HepG2 (cell line): ENCODE measurements at regions of chr3 and their contacts with region 1.

Region 1: GRCh38 chr3:50568947-50569749 is at the start of gene HEMK1:
- DNase-seq: peak; percentile 85
- ATAC-seq: peak; percentile 85
- H3K4me3 ChIP-seq: peak within 1 kb of the TSS; percentile 62 to 84 (median 82)
- H3K27ac ChIP-seq: peak within 1 kb of the TSS; percentile 77
- H3K4me1 ChIP-seq: peaks cover 57% of the 10 kb centered on the region
- H3K27me3 ChIP-seq: peaks cover 4 to 7% of the 10 kb centered on the region in 2 experiments; a peak in 2 of 5 replicates
- CTCF ChIP-seq: no peak
- EP300 ChIP-seq: no peak
- POLR2A ChIP-seq: no peak; a peak in 2 of 4 replicates
- RAD21 ChIP-seq: 0 out of 2 replicates have a peak, but pooled peaks have one; percentile 22
- total RNA-seq, gene HEMK1: 6.3 and 9.8 TPM in 2 replicates

Region 2: GRCh38 chr3:50515565-50516439 is 53.3 kb before region 1 on chr3:
- CTCF ChIA-PET with region 1: no interaction called
- POLR2A ChIA-PET with region 1: no interaction called
- in situ Hi-C with region 1: no loop called
- intact Hi-C with region 1: no loop called
- DNase-seq: peak; percentile 68
- ATAC-seq: peak; percentile 80
- H3K4me3 ChIP-seq: peak overlapping the region; percentile 20 to 51 (median 37); a peak in 5 of 6 replicates
- H3K27ac ChIP-seq: no peak overlapping the region
- H3K4me1 ChIP-seq: peaks cover 40% of the 10 kb centered on the region
- H3K27me3 ChIP-seq: peaks cover 2 to 48% of the 10 kb centered on the region in 2 experiments; a peak in 3 of 5 replicates
- CTCF ChIP-seq: peak; percentile 40
- EP300 ChIP-seq: no peak; a peak in 1 of 4 replicates
- POLR2A ChIP-seq: no peak
- RAD21 ChIP-seq: no peak

Region 3: DNA sequence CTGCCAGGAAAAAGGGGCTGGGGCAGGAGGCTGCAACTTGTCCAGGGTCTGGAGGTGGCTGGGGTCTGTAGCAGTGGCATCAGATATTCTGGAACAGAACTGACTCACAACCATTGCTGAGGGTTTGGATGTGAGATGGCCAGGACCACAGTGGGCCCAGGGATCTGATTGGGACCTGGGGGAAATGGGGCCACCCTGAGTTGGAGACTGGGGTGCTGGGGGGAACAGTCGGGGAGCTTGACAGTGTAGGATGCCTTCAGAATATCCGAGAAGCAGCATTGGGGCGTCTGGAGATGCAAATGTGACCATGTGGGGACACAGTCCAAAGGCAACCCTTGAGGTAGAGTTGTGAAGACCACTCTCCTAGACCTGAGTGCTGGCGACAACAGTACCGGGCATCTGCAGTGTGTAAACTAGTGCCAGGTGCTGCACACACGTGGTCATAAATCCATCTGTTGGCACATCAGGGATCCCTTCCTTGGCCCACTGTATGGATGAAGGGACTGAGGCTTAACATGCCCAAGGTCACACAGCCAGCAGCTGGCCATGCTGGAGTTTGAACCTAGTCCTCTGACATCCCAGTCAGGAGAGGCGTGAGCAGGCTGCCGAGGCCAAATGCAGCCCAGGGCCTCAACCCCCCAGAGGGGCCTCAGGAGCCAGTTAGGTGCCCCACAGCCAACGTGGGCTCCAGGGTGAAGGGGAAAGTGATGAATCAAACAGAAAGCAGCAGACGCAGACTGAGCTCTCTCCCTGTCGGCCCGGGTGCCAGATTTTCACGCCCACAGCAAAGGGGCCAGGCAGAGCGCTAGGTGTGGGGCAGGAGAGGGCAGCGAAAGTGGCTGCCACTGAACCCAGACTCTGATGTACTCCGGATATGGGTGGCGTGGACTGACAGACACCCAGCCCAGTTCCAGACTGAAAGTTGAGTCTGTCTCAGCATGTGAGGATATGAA is 18.9 kb after region 1 on chr3:
- CTCF ChIA-PET with region 1: no interaction called
- POLR2A ChIA-PET with region 1: interaction called, 17 read pairs
- in situ Hi-C with region 1: no loop called
- intact Hi-C with region 1: loop called (anchors 2 kb)
- DNase-seq: peak; percentile 57
- ATAC-seq: peak; percentile 55
- H3K4me3 ChIP-seq: peak overlapping the region in 2 of 3 experiments; percentile 21 to 49; a peak in 3 of 6 replicates
- H3K27ac ChIP-seq: peak overlapping the region; percentile 99
- H3K4me1 ChIP-seq: peaks cover 100% of the 10 kb centered on the region
- H3K27me3 ChIP-seq: no peaks in the 10 kb centered on the region; a peak in 1 of 5 replicates
- CTCF ChIP-seq: no peak
- EP300 ChIP-seq: peak in 1 of 2 experiments; percentile 76; a peak in 3 of 4 replicates
- POLR2A ChIP-seq: peak; percentile 40 to 44; a peak in 2 of 4 replicates
- RAD21 ChIP-seq: peak; percentile 40; the same call in 1 of the 2 replicates

Region 4: GRCh38 chr3:50600841-50601591 is 31.9 kb after region 1 on chr3:
- CTCF ChIA-PET with region 1: no interaction called
- POLR2A ChIA-PET with region 1: interaction called, 48 read pairs
- in situ Hi-C with region 1: no loop called
- intact Hi-C with region 1: no loop called
- DNase-seq: peak; percentile 90
- ATAC-seq: peak; percentile 80
- H3K4me3 ChIP-seq: peak overlapping the region; percentile 47 to 72 (median 49); a peak in 5 of 6 replicates
- H3K27ac ChIP-seq: peak overlapping the region; percentile 97
- H3K4me1 ChIP-seq: peaks cover 79% of the 10 kb centered on the region
- H3K27me3 ChIP-seq: no peaks in the 10 kb centered on the region
- CTCF ChIP-seq: peak; percentile 29; the same call in 1 of the 2 replicates
- EP300 ChIP-seq: peak in 1 of 2 experiments; percentile 74; a peak in 2 of 4 replicates
- POLR2A ChIP-seq: peak in 1 of 2 experiments; percentile 68; a peak in 2 of 4 replicates
- RAD21 ChIP-seq: no peak

Region 5: DNA sequence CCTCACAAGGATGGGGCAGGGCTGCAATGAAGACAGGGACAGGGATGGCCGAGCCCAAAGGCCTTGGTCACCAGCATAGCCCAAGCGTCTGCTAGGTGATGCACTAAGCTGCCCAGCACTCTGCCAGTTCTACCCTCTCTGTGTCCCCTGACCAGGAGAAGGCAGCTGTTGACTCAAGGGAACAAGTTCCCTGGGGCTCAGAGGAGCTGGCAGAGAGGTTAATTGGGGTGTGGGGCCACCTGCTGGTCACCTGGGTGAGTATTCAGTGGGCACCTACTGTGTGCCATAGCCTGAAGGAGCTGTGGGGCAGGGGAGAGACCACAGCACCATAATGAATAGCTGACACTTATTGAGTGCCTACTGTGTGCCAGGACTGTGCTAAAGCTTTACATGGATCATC is 83.6 kb after region 1 on chr3:
- CTCF ChIA-PET with region 1: interaction called, 4 read pairs
- POLR2A ChIA-PET with region 1: interaction called, 3 read pairs
- in situ Hi-C with region 1: loop called (anchors 5 kb)
- intact Hi-C with region 1: no loop called
- DNase-seq: peak; percentile 43
- ATAC-seq: peak; percentile 65
- H3K4me3 ChIP-seq: no peak overlapping the region
- H3K27ac ChIP-seq: no peak overlapping the region
- H3K4me1 ChIP-seq: no peaks in the 10 kb centered on the region
- H3K27me3 ChIP-seq: peaks cover 0 to 15% of the 10 kb centered on the region in 2 experiments; a peak in 3 of 5 replicates
- CTCF ChIP-seq: peak; percentile 80
- EP300 ChIP-seq: no peak
- POLR2A ChIP-seq: no peak
- RAD21 ChIP-seq: peak; percentile 65

Region 6: DNA sequence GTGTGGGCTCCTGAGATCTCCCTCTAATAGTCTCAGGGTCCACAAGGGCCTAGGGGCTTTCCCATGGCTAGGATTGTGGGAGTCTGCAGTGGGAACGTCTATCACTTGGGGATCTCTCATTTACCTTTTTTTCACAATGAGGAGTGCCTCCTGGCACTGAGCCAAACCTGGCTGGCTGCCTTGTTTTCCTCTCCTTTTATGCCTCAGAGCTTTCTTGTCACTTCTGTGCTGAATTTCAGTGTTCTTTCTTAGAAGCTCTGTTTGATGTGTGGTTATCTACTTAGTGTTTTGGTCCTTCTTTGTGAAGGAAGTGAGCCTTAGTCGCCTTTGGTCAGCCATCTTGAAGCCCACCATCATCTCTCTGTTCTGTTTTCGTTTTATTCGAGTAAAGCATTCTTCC is 139.5 kb after region 1 on chr3:
- CTCF ChIA-PET with region 1: no interaction called
- POLR2A ChIA-PET with region 1: no interaction called
- in situ Hi-C with region 1: no loop called
- intact Hi-C with region 1: no loop called
- DNase-seq: no peak
- ATAC-seq: no peak
- H3K4me3 ChIP-seq: no peak overlapping the region
- H3K27ac ChIP-seq: no peak overlapping the region
- H3K4me1 ChIP-seq: no peaks in the 10 kb centered on the region
- H3K27me3 ChIP-seq: no peaks in the 10 kb centered on the region; a peak in 1 of 5 replicates
- CTCF ChIP-seq: no peak
- EP300 ChIP-seq: no peak
- POLR2A ChIP-seq: no peak
- RAD21 ChIP-seq: no peak

Region 7: GRCh38 chr3:51384726-51385473 is 815.8 kb after region 1 on chr3 and contains the start of gene MANF:
- CTCF ChIA-PET with region 1: no interaction called
- POLR2A ChIA-PET with region 1: interaction called, 11 read pairs
- in situ Hi-C with region 1: loop called (anchors 5 kb)
- intact Hi-C with region 1: no loop called
- DNase-seq: peak; percentile 96
- ATAC-seq: peak; percentile 94
- H3K4me3 ChIP-seq: peak within 1 kb of the TSS; percentile 90 to 95 (median 92)
- H3K27ac ChIP-seq: peak within 1 kb of the TSS; percentile 96
- H3K4me1 ChIP-seq: peaks cover 55% of the 10 kb centered on the region
- H3K27me3 ChIP-seq: peaks cover 0 to 1% of the 10 kb centered on the region in 2 experiments; a peak in 1 of 5 replicates
- CTCF ChIP-seq: peak; percentile 2; the same call in 1 of the 2 replicates
- EP300 ChIP-seq: no peak
- POLR2A ChIP-seq: peak in 1 of 2 experiments; percentile 85; a peak in 2 of 4 replicates
- RAD21 ChIP-seq: peak; percentile 25; the same call in 1 of the 2 replicates
- total RNA-seq, gene MANF: 111 and 269 TPM in 2 replicates